ENCODE measurements at regions of chr1 and their contacts with region 1.

Region 1: GRCh38 chr1:61120998-61121397 is 38.6 kb downstream of the NFIA start:
- DNase-seq: peak; percentile 70
- H3K4me3 Mint-ChIP-seq: peak overlapping the region; percentile 44
- H3K27ac Mint-ChIP-seq: peak overlapping the region; percentile 35
- H3K4me1 Mint-ChIP-seq: peaks cover 73% of the 10 kb centered on the region
- H3K27me3 Mint-ChIP-seq: no peaks in the 10 kb centered on the region
- CTCF ChIP-seq: no peak

Region 2: GRCh38 chr1:61056573-61057439 is 64.2 kb before region 1 on chr1:
- CTCF ChIA-PET with region 1: no interaction called
- POLR2A ChIA-PET with region 1: interaction called, 14 read pairs
- intact Hi-C with region 1: no loop called
- DNase-seq: peak; percentile 63
- H3K4me3 Mint-ChIP-seq: peak overlapping the region; percentile 86
- H3K27ac Mint-ChIP-seq: peak overlapping the region; percentile 73
- H3K4me1 Mint-ChIP-seq: peaks cover 14% of the 10 kb centered on the region
- H3K27me3 Mint-ChIP-seq: no peaks in the 10 kb centered on the region
- CTCF ChIP-seq: no peak

Region 3: DNA sequence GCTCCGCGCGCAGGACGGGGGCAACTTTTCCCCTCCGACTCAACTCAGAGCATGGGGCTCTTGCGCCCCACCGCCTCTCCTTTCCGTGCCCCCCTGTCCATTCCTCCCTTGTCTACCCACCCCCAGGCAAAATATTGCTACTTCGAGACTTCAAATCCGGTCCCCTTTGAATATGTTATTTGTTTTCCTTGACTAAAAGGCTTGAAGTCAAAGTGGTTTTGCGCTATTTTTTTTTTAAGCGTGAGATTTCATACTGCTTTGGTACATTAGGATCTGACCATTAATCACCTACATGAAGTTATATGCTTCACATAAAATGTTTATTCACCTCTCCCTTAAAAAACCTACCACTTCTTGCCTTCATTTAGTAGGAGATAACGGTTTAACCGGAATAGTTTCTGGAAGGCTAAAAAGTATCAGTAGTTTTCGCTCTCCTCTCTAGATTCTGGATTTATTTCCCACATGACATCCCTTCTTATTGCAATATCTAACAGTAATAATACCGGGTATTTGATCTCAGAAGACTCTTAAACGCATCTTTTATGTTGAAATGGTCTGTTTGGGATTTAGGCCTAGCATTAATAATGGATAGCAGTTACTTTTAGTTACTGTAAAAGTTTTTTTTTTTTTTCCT is 37.1 kb before region 1 on chr1:
- CTCF ChIA-PET with region 1: interaction called, 10 read pairs
- POLR2A ChIA-PET with region 1: interaction called, 86 read pairs
- intact Hi-C with region 1: no loop called
- DNase-seq: peak; percentile 36
- H3K4me3 Mint-ChIP-seq: peak overlapping the region; percentile 88
- H3K27ac Mint-ChIP-seq: peak overlapping the region; percentile 96
- H3K4me1 Mint-ChIP-seq: peaks cover 29% of the 10 kb centered on the region
- H3K27me3 Mint-ChIP-seq: no peaks in the 10 kb centered on the region
- CTCF ChIP-seq: no peak

Region 4: DNA sequence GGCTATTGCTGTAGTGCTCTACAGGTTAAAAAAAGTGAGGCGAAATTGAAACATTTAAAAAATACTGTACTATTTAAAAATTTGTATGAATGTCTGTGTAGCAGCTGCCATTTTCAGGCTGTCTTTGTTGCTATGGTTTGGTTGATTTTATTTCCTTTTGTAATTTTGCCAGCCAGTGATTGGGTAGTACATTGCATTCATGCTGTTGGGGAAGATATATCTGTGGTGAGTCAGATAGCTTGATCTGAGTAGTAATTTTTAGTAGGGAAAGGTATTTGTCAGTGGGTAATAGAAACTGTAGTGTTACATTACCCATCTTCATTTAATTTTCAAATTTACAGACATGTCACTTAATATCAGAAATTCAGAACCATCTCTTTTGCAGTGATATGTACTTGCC is 23.7 kb before region 1 on chr1:
- CTCF ChIA-PET with region 1: interaction called, 5 read pairs
- POLR2A ChIA-PET with region 1: interaction called, 10 read pairs
- intact Hi-C with region 1: no loop called
- DNase-seq: peak; percentile 55
- H3K4me3 Mint-ChIP-seq: no peak overlapping the region
- H3K27ac Mint-ChIP-seq: no peak overlapping the region
- H3K4me1 Mint-ChIP-seq: peaks cover 55% of the 10 kb centered on the region
- H3K27me3 Mint-ChIP-seq: no peaks in the 10 kb centered on the region
- CTCF ChIP-seq: no peak

Region 5: GRCh38 chr1:61132176-61133001 is 11.4 kb after region 1 on chr1:
- CTCF ChIA-PET with region 1: interaction called, 3 read pairs
- POLR2A ChIA-PET with region 1: interaction called, 93 read pairs
- intact Hi-C with region 1: no loop called
- DNase-seq: peak; percentile 58
- H3K4me3 Mint-ChIP-seq: peak overlapping the region; percentile 38
- H3K27ac Mint-ChIP-seq: peak overlapping the region; percentile 61
- H3K4me1 Mint-ChIP-seq: peaks cover 19% of the 10 kb centered on the region
- H3K27me3 Mint-ChIP-seq: no peaks in the 10 kb centered on the region
- CTCF ChIP-seq: no peak

Region 6: DNA sequence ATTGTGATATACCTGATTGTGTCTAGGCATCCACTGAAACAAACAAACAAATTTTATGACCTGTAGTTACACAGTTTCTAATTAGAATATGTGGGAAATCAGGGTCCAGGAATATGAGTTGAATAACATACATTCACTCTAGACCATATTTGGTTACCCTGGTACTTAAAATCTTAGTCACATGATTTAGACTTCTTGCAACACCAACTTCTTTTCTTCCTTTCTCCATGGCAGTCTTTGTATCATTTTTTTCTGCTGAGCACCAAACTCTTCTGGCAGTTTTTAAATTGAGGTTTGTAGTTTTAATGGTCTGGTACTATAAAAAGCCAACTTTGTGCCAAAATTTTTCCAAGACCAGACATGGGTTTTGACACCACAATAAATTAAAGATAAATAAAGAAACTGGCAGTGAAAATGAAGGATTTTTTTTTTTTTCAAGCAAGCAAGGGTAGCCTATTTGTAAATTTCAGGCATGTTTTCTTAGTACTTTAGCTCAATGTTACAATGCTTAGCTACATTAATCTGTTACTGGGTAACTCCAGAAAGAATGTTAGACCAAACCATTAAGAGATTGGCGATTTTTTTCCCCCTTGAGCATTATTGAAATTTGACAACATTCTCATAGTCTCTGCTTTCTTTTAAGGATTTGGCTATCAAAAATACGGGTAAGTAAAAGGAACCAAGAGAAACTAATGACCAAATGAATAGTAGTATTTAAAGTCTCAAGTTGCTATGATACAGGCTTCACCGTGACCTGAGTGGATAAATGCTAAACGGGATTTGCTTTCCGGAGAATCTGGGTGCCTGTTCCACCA is 69.8 kb after region 1 on chr1:
- CTCF ChIA-PET with region 1: no interaction called
- POLR2A ChIA-PET with region 1: no interaction called
- intact Hi-C with region 1: no loop called
- DNase-seq: no peak
- H3K4me3 Mint-ChIP-seq: no peak overlapping the region
- H3K27ac Mint-ChIP-seq: peak overlapping the region; percentile 3
- H3K4me1 Mint-ChIP-seq: peaks cover 11% of the 10 kb centered on the region
- H3K27me3 Mint-ChIP-seq: no peaks in the 10 kb centered on the region
- CTCF ChIP-seq: no peak

Measured in MCF 10A (cell line).